H1 (cell line): ENCODE measurements at regions of chr19 and their contacts with region 1.

Region 1: GRCh38 chr19:42244347-42245220 is 2.2 kb upstream of the GSK3A start:
- DNase-seq: peak; percentile 82 to 92
- H3K4me3 ChIP-seq: peak overlapping the region; percentile 48 to 86 (median 76)
- H3K27ac ChIP-seq: no peak overlapping the region; the same call in 1 of the 2 replicates
- H3K4me1 ChIP-seq: peaks cover 2 to 14% (median 4%) of the 10 kb centered on the region in 4 experiments
- H3K27me3 ChIP-seq: no peaks in the 10 kb centered on the region; a peak in 1 of 7 replicates
- CTCF ChIP-seq: peak; percentile 48 to 82 (median 73)
- EP300 ChIP-seq: no peak
- POLR2A ChIP-seq: no peak
- RAD21 ChIP-seq: peak; percentile 20 to 44; a peak in 2 of 4 replicates

Region 2: GRCh38 chr19:42108527-42109389 is 135.8 kb before region 1 on chr19:
- CTCF ChIA-PET with region 1: interaction called, 15 read pairs
- POLR2A ChIA-PET with region 1: interaction called, 3 read pairs
- DNase-seq: peak; percentile 82 to 95
- H3K4me3 ChIP-seq: no peak overlapping the region
- H3K27ac ChIP-seq: no peak overlapping the region
- H3K4me1 ChIP-seq: peaks cover 0 to 12% (median 4%) of the 10 kb centered on the region in 4 experiments; a peak in 6 of 7 replicates
- H3K27me3 ChIP-seq: no peaks in the 10 kb centered on the region
- CTCF ChIP-seq: peak; percentile 100
- EP300 ChIP-seq: peak in 1 of 2 experiments; percentile 26; a peak in 1 of 3 replicates
- POLR2A ChIP-seq: no peak
- RAD21 ChIP-seq: peak; percentile 100

Region 3: GRCh38 chr19:42219812-42220750 is 24.5 kb before region 1 on chr19 and contains the start of gene ZNF526:
- CTCF ChIA-PET with region 1: interaction called, 7 read pairs
- POLR2A ChIA-PET with region 1: interaction called, 12 read pairs
- DNase-seq: peak; percentile 97
- H3K4me3 ChIP-seq: peak within 1 kb of the TSS; percentile 71 to 95 (median 85)
- H3K27ac ChIP-seq: peak within 1 kb of the TSS; percentile 32; the same call in 1 of the 2 replicates
- H3K4me1 ChIP-seq: peaks cover 3 to 11% (median 8%) of the 10 kb centered on the region in 4 experiments; a peak in 6 of 7 replicates
- H3K27me3 ChIP-seq: no peaks in the 10 kb centered on the region
- CTCF ChIP-seq: peak in 1 of 3 experiments; percentile 29; a peak in 2 of 4 replicates
- EP300 ChIP-seq: no peak
- POLR2A ChIP-seq: peak; percentile 46 to 84
- RAD21 ChIP-seq: peak in 1 of 2 experiments; percentile 11; a peak in 1 of 4 replicates
- total RNA-seq, gene ZNF526: 13.5 and 14.1 TPM in 2 replicates

Region 4: DNA sequence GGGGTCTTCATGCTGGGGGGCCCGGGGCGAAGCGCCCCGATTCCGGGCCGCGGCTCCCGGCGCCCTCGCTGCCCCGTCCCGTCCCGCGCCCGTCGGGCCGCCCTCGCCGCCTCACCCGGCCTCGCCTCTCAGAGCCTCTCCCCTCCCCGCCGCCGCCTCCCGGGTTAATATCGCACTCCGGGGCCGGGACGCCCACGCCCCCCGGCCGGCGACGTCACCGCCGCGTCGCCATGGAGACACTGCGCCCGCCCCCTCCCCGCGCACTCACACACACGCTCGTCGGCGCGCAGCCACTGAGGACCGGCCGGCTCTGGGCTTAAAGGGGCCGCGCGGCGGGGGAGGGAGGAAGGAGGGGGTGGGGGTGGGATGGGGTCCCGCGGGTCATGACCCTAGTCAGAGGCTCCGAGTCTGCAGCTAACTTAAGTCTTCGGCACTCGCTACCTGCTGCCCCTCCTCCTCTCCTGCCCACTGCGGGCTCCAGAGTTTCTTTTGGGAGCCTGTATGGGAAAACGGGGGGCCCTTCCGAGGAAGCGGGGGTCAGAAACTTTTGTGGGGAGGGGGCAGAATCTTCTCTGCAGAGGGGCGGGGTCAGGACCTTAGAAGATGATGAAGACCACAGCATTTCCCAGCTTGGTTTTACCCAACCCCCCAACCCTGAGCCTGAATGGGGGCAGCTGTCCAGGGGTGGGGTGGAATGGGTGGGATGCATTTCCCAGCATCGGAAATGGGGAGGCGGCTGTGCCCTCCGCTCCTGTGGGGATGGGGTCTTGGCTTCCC is 10.6 kb after region 1 on chr19 and contains the start of gene ERF:
- CTCF ChIA-PET with region 1: interaction called, 75 read pairs
- POLR2A ChIA-PET with region 1: interaction called, 9 read pairs
- DNase-seq: peak in 1 of 2 experiments; percentile 94
- H3K4me3 ChIP-seq: peak within 1 kb of the TSS; percentile 71 to 99 (median 78)
- H3K27ac ChIP-seq: peak within 1 kb of the TSS; percentile 89
- H3K4me1 ChIP-seq: peaks cover 11 to 29% (median 21%) of the 10 kb centered on the region in 4 experiments
- H3K27me3 ChIP-seq: peaks cover 0 to 3% (median 2%) of the 10 kb centered on the region in 4 experiments; a peak in 2 of 7 replicates
- CTCF ChIP-seq: no peak
- EP300 ChIP-seq: no peak
- POLR2A ChIP-seq: no peak; a peak in 1 of 3 replicates
- RAD21 ChIP-seq: no peak
- total RNA-seq, gene ERF: 62.7 and 73.9 TPM in 2 replicates

Region 5: GRCh38 chr19:42274065-42274682 is 29.6 kb after region 1 on chr19:
- CTCF ChIA-PET with region 1: interaction called, 260 read pairs
- POLR2A ChIA-PET with region 1: interaction called, 68 read pairs
- DNase-seq: no peak
- H3K4me3 ChIP-seq: no peak overlapping the region
- H3K27ac ChIP-seq: no peak overlapping the region
- H3K4me1 ChIP-seq: peaks cover 0 to 20% (median 8%) of the 10 kb centered on the region in 4 experiments; a peak in 5 of 7 replicates
- H3K27me3 ChIP-seq: no peaks in the 10 kb centered on the region
- CTCF ChIP-seq: no peak
- EP300 ChIP-seq: no peak
- POLR2A ChIP-seq: no peak
- RAD21 ChIP-seq: no peak

Region 6: GRCh38 chr19:42295831-42296525 is 51.4 kb after region 1 on chr19:
- CTCF ChIA-PET with region 1: interaction called, 155 read pairs
- POLR2A ChIA-PET with region 1: interaction called, 9 read pairs
- DNase-seq: peak; percentile 65 to 100
- H3K4me3 ChIP-seq: no peak overlapping the region
- H3K27ac ChIP-seq: no peak overlapping the region
- H3K4me1 ChIP-seq: peaks cover 0 to 2% (median under 1%) of the 10 kb centered on the region in 4 experiments; a peak in 1 of 7 replicates
- H3K27me3 ChIP-seq: no peaks in the 10 kb centered on the region
- CTCF ChIP-seq: peak; percentile 87 to 100 (median 98)
- EP300 ChIP-seq: no peak
- POLR2A ChIP-seq: peak in 1 of 2 experiments; percentile 18; a peak in 1 of 3 replicates
- RAD21 ChIP-seq: peak; percentile 67 to 76